Mammary epithelial cell (primary cell): ENCODE measurements at regions of chr7 and their contacts with region 1.

Region 1: GRCh38 chr7:117014673-117015133 is 61.4 kb downstream of the ST7 start:
- DNase-seq: peak; percentile 54
- H3K4me3 ChIP-seq: peak overlapping the region; percentile 2 to 37 (median 20)
- H3K27ac ChIP-seq: peak overlapping the region; percentile 58
- H3K4me1 ChIP-seq: peaks cover 43% of the 10 kb centered on the region
- H3K27me3 ChIP-seq: no peaks in the 10 kb centered on the region
- CTCF ChIP-seq: no peak

Region 2: GRCh38 chr7:116977172-116977571 is 37.5 kb before region 1 on chr7:
- CTCF ChIA-PET with region 1: no interaction called
- dilution Hi-C with region 1: no loop called
- in situ Hi-C with region 1: no loop called
- intact Hi-C with region 1: no loop called
- DNase-seq: no peak
- H3K4me3 ChIP-seq: no peak overlapping the region
- H3K27ac ChIP-seq: no peak overlapping the region
- H3K4me1 ChIP-seq: no peaks in the 10 kb centered on the region
- H3K27me3 ChIP-seq: no peaks in the 10 kb centered on the region
- CTCF ChIP-seq: no peak

Region 3: GRCh38 chr7:117061751-117062150 is 47.0 kb after region 1 on chr7:
- CTCF ChIA-PET with region 1: no interaction called
- dilution Hi-C with region 1: loop called (anchors 5 kb)
- in situ Hi-C with region 1: no loop called
- intact Hi-C with region 1: no loop called
- DNase-seq: peak; percentile 40
- H3K4me3 ChIP-seq: no peak overlapping the region
- H3K27ac ChIP-seq: no peak overlapping the region
- H3K4me1 ChIP-seq: no peaks in the 10 kb centered on the region
- H3K27me3 ChIP-seq: no peaks in the 10 kb centered on the region
- CTCF ChIP-seq: no peak